ENCODE measurements at regions of chr11 and their contacts with region 1.

Region 1: DNA sequence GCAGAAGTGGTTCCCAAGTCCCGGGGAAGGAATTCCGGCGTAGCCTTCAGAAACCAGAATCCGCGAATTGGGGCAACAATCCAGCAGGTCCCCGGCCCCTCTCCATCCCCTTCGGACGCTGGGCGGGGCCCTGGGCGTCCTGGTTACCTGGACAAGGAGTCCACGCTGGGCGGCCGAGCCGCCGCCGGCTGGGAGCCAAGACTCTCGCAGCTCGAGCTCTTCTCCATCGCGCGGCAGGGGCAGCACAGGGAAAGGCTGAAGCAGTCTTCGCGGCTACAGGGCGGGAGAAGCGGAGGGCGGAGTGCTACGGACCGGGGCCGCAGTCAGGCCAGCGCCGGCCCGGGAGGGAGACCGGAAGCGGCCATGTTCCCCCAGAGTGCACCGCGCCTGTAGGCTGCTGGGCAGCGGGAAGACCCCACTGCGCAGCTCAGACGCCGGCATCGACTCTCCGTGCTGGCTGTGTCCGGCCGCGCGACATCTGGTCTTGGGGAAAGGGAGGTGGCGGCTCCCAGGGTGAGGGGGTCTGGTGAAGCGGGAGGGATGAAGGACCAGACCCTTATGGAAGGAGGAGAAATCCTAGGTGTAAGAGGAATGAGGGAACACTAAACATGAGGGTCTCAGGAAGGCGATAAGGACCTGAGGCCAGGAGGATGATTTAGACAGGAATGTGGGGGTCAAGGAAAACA is at the start of gene MTMR2:
- DNase-seq: peak; percentile 92
- total RNA-seq, gene MTMR2: 22.2 TPM

Region 2: DNA sequence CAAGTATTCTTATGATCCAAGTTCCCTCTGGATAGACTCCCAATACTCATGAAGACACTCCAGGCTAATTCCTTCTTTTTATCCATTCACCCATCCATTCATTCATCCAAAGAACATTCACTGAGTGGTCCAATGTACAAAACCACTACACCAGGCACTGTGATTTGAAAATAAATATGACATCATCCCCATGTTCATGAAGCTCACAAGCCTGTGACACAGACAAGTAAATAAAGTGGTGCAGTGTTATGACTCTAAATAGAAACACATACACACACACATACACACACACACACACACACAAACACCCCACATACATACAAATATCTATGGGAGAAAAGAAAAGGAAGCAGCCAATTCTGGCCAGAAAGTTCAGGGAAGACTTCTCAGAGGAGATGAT is 35.4 kb before region 1 on chr11:
- intact Hi-C with region 1: loop called (anchors 5 kb)
- DNase-seq: no peak

Region 3: GRCh38 chr11:96001037-96001436 is 77.2 kb after region 1 on chr11:
- intact Hi-C with region 1: loop called (anchors 10 kb)
- DNase-seq: peak; percentile 80

Region 4: DNA sequence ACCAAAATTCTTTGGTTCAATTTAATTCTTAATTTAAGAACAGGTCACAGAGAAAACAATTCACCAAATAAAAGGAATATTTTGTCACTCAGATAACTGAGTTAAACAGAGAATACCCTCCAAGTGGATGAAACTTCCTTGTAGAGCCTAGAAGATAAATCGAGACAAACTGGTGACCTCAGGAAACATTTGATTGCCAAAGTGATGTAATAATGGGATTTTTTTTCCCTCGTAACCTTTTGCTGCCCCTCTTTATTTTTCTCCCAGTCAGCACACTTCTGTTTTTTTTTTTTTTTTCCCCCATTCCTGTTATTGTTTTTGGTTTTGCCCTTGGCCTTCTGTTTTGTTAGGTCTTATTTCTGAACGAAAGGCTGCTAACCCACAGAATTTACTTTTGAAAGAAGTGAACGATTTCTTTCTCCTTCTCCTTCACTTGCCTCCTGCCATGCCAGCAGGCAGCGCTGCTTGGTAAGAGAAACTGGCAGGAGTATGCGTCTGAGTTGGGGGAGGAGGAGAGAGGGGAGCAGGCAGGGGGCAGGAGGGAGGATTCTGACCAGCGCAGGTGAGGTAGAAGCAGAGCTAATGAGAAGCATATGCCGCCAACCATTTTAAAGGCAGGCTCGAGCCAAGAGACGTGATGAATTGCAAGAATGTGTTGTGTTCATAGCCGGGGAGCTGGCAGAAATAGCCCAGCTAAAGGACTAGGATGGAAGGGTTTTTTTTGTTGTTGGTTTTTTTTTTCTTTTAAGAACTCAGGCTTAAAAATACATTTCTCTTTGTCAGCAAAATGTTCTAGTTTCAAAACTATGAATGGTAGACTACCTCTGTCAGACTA is 122.0 kb after region 1 on chr11:
- intact Hi-C with region 1: no loop called
- DNase-seq: no peak